Brain microvascular endothelial cell (primary cell): ENCODE measurements at regions of chr15 and their contacts with region 1.

Region 1: GRCh38 chr15:37100109-37100965 is at the start of gene MEIS2:
- DNase-seq: peak; percentile 79
- H3K4me3 ChIP-seq: peak within 1 kb of the TSS; percentile 94
- H3K27ac ChIP-seq: peak within 1 kb of the TSS; percentile 60
- H3K27me3 ChIP-seq: peaks cover 25% of the 10 kb centered on the region
- CTCF ChIP-seq: no peak

Region 2: DNA sequence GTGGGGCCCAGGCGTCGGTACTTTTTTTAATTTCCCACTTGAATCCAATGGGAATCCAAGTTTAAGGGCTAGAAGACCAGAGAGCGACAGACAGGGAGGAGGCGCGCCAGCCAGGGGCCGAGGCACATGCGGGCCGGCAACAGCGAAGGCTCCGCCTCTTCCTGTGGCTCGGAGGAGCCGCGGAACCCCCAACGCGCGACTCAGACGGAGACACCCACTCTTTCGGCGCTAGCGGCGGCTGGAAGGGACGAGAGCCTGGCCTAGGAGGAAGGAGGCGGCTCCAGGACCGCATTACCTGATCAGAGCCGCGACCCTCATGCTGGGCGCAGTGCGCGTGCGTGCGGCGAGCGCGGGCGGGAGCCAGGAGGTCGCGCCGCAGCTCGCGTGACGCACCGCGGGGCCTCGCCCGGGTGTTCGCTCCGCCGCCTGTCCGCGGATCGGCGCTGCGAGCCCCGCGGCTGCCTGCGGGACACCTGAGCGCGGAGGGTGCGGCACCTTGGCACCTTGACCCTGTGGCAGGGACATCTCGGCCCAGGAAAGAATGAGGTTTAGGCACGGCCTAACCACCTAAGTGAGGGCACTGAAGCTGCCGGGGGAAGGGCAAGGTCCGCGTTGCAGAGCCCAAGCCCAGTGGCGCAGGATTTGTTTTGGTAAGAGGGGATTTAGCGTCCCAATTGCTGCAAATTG is 1554.4 kb before region 1 on chr15 and contains the start of gene DPH6:
- in situ Hi-C with region 1: loop called (anchors 25 kb)
- DNase-seq: peak; percentile 80
- H3K4me3 ChIP-seq: peak within 1 kb of the TSS; percentile 64
- H3K27ac ChIP-seq: peak within 1 kb of the TSS; percentile 97
- H3K27me3 ChIP-seq: no peaks in the 10 kb centered on the region
- CTCF ChIP-seq: no peak

Region 3: DNA sequence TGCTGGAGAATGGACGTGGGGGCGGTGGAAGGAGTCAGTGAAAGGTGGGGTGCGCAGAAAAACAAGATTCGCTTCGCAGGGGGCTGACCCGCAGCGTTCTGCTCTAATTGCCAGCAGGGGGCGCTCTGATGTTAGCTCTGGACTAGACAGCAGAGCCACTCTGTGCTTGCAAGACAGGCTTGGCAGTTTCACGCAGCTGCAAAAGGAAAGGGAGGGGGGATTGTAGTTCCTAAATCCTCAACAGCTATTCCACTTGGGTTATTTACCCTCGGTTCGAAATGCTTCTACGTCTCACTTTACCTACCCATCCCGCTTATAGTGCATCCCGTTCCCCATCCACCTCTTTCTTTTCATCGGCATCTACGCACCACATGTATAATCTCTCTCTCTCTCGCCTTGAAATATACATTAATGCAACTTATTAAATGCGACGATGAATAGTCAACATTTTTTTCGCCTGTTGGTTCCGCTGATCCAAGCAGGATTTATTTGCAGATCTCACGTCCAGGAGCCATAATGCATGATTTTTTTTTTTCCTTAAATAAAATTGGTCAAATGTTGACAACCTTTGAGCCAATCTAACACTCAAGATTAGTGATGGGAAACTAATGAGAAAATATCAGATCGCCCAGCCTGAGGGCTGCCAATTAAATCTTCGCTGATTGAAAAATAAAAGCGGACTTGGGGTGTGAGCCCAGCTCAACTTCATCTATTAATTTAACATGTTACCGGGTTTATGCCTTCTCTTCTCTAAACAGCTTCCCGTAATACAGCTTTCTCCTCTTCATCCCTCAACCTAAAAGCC is 216.4 kb before region 1 on chr15:
- in situ Hi-C with region 1: loop called (anchors 10 kb)
- DNase-seq: peak; percentile 79
- H3K4me3 ChIP-seq: no peak overlapping the region
- H3K27ac ChIP-seq: no peak overlapping the region
- H3K27me3 ChIP-seq: peaks cover 94% of the 10 kb centered on the region
- CTCF ChIP-seq: peak; percentile 88